ENCODE measurements at regions of chr4 and their contacts with region 1.

Region 1: DNA sequence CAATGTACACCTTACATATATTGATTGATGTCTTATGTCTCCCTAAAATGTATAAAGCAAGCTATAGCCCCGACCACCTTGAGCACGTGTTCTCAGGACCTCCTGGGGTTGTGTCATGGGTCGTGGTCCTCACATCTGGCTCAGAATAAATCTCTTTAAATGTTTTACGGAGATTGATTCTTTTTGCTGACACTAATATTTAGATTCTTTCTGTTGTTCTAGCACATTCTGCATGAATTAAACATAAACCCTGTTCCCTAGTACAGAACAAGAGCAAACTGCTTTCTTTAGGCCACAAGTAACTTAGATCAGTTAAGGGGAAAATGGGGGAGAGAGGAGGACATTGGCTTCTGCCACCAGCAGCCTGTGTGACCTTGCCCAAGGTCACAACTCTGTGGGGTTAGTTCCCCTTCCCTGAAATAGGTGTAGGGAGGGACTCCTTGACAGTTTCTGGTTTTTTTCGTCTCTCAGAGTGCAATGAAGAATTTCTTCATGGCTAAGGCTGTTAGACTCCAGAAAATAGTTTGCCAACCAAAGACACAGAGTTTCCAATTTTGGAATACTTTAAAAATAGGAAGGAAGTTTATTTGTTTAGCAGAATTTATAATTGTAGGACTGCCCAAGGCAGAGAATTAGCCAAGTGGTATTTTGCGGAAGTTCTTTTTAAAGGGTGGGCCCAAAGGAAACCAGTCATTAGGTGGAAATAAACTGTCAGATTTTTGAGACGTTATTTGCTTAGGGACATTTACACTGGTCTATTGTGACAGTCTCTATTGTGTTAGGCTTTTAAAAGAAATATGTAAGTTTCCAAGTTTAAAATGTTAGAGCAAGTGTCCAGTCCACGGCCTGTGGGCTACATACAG is 29.4 kb downstream of the PTTG2 start:
- DNase-seq: no peak
- ATAC-seq: no peak
- H3K4me3 ChIP-seq: no peak overlapping the region
- H3K4me3 Mint-ChIP-seq: no peak overlapping the region
- H3K27ac ChIP-seq: no peak overlapping the region
- H3K27ac Mint-ChIP-seq: no peak overlapping the region
- H3K4me1 ChIP-seq: no peaks in the 10 kb centered on the region
- H3K4me1 Mint-ChIP-seq: peaks cover 24% of the 10 kb centered on the region
- H3K27me3 ChIP-seq: no peaks in the 10 kb centered on the region
- H3K27me3 Mint-ChIP-seq: no peaks in the 10 kb centered on the region
- CTCF ChIP-seq: no peak

Region 2: DNA sequence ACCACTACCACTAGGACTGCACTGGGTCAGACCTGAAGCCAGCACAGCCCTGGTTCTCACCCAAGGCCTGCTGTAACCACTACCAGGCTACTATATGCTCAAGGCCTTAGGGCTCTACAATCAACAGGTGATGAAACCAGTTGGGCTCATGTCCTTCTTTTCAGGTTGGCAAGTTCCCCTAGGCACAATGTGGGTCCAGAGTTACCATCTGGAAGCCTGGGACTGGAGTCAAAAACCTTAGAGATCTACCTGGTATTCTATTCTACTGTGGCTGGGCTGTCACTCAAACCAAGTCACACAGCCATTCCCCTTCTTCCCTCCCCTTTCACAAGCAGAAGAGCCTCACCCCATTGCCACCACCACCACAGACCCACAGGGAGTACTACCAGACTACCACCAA is 479.0 kb before region 1 on chr4:
- CTCF ChIA-PET with region 1: no interaction called
- POLR2A ChIA-PET with region 1: no interaction called
- intact Hi-C with region 1: no loop called
- DNase-seq: no peak
- ATAC-seq: no peak
- H3K4me3 ChIP-seq: no peak overlapping the region
- H3K4me3 Mint-ChIP-seq: no peak overlapping the region
- H3K27ac ChIP-seq: no peak overlapping the region
- H3K27ac Mint-ChIP-seq: no peak overlapping the region
- H3K4me1 ChIP-seq: no peaks in the 10 kb centered on the region
- H3K4me1 Mint-ChIP-seq: no peaks in the 10 kb centered on the region
- H3K27me3 ChIP-seq: no peaks in the 10 kb centered on the region
- H3K27me3 Mint-ChIP-seq: peaks cover 41% of the 10 kb centered on the region
- CTCF ChIP-seq: no peak

Region 3: GRCh38 chr4:38026238-38026637 is 36.6 kb after region 1 on chr4:
- CTCF ChIA-PET with region 1: no interaction called
- POLR2A ChIA-PET with region 1: no interaction called
- intact Hi-C with region 1: loop called in 1 of 2 experiments (anchors 5 kb)
- DNase-seq: no peak
- ATAC-seq: no peak
- H3K4me3 ChIP-seq: no peak overlapping the region
- H3K4me3 Mint-ChIP-seq: no peak overlapping the region
- H3K27ac ChIP-seq: no peak overlapping the region
- H3K27ac Mint-ChIP-seq: no peak overlapping the region
- H3K4me1 ChIP-seq: no peaks in the 10 kb centered on the region
- H3K4me1 Mint-ChIP-seq: no peaks in the 10 kb centered on the region
- H3K27me3 ChIP-seq: no peaks in the 10 kb centered on the region
- H3K27me3 Mint-ChIP-seq: no peaks in the 10 kb centered on the region
- CTCF ChIP-seq: no peak

Measured in CD4-positive, alpha-beta T cell (primary cell).